Psoas muscle (tissue), 8 donors: ENCODE measurements at regions of chr7 and their contacts with region 1.

Region 1: GRCh38 chr7:39465055-39465929 is 100.9 kb upstream of the YAE1 start:
- DNase-seq: no peak
- ATAC-seq: peak in 3 of 4 donors; percentile 49 to 96 (median 89)
- H3K4me3 ChIP-seq: peak overlapping the region; percentile 35
- H3K27ac ChIP-seq: no peak overlapping the region
- H3K4me1 ChIP-seq: no peaks in the 10 kb centered on the region
- H3K27me3 ChIP-seq: peaks cover 0 to 3% (median 0%) of the 10 kb centered on the region in 3 donors
- CTCF ChIP-seq: peak; percentile 76

Region 2: GRCh38 chr7:38398725-38399321 is 1066.5 kb before region 1 on chr7:
- intact Hi-C with region 1: loop called in 1 of 2 experiments (anchors 5 kb)
- DNase-seq: peak; percentile 27 to 59
- ATAC-seq: peak in 1 of 4 donors; percentile 74
- H3K4me3 ChIP-seq: no peak overlapping the region
- H3K27ac ChIP-seq: no peak overlapping the region
- H3K4me1 ChIP-seq: no peaks in the 10 kb centered on the region
- H3K27me3 ChIP-seq: no peaks in the 10 kb centered on the region
- CTCF ChIP-seq: peak; percentile 83

Region 3: DNA sequence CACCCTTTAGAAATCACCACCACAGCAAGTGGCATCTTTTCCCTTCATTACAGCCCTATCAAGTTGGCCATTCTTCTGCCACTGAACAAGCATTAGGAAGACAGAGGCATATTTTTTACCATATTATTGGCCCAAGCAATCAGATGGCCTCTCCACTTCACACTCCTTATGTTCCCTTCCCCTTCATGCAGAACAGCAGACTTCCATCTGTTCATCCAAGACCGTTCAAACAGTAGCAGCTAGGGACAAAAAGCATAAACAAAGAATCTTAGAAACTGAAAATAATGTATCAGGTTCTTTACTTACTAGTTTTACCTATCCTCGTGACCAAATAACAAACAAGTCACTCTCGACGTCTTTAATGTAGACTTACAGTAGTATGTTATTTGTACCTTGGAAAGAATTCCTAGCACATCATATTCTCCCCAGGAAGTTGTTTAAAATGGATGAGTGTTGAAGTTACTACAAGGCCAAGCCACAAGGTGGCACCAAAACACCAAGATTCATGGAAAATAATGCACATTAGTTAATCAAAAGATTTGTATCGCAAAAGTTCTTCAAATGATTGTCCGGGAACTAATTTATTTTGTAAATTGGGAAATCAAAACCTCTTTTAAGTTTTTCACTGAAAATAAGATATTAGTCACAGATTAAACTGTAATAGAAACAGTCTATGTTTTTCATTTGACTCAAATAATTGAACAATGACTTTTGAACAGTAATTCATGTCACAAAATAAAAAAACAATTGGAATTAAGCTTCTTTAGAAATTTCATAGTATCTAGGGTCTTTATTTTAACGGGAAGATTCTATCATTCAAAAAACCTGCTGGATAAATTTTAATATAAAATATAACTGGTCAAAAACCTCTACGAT is 668.4 kb before region 1 on chr7:
- intact Hi-C with region 1: loop called in 1 of 2 experiments (anchors 5 kb)
- DNase-seq: peak in 1 of 2 donors; percentile 18
- ATAC-seq: peak in 1 of 4 donors; percentile 73
- H3K4me3 ChIP-seq: no peak overlapping the region
- H3K27ac ChIP-seq: no peak overlapping the region
- H3K4me1 ChIP-seq: no peaks in the 10 kb centered on the region
- H3K27me3 ChIP-seq: no peaks in the 10 kb centered on the region
- CTCF ChIP-seq: peak; percentile 82

Region 4: DNA sequence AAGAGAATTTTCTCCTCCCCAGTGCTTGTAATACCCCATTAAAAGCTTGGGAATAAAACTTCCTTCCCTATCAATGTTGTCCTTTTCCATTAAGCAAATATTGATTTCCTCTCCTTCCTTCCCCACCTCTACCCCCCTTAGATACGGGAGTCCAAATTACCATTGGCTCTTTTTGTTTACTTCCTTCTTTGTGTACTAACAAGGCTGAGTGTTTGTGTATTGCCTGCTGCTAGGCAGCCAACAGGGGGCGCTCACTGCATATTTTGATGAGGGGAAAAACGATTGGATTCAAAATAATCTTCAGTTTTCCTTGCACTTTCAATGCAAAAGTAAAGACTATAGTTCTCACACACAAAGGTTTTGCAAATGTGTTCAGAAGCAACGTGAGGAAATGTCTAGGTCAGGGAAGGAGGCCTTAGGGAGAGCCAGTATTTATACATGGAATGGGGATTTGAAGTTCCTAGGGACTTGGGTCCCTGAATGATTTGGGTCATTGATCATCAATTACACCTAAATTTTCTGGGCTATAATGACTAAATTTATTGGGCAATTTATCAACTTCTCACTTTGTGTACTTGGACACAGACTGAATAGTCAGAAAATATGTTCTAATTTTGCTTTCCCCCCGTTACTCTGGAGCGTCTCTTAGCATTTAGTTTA is 532.7 kb before region 1 on chr7:
- intact Hi-C with region 1: loop called (anchors 2 to 10 kb)
- DNase-seq: peak; percentile 40 to 68
- ATAC-seq: no peak
- H3K4me3 ChIP-seq: no peak overlapping the region
- H3K27ac ChIP-seq: no peak overlapping the region
- H3K4me1 ChIP-seq: no peaks in the 10 kb centered on the region
- H3K27me3 ChIP-seq: no peaks in the 10 kb centered on the region
- CTCF ChIP-seq: peak; percentile 58

Region 5: DNA sequence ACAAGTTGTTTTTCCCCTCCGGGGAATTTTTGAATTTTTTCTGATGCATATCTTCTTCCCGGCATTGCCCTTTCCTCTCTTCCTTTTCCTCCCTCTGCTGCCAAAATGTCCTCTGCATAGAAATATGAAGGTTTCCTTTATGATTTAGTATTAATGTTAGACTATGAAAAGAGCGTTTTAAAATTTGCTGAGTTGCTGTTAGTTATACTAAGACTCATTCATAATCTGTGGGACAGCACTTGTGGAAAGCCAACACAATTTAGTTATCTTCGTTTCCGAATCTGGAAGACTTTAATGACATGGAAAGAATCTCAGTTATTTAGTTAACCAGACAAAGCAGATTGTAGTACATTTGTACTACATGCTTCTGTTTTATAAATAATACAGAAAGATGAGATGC is 462.5 kb before region 1 on chr7:
- intact Hi-C with region 1: loop called in 1 of 2 experiments (anchors 5 kb)
- DNase-seq: no peak
- ATAC-seq: no peak
- H3K4me3 ChIP-seq: no peak overlapping the region
- H3K27ac ChIP-seq: no peak overlapping the region
- H3K4me1 ChIP-seq: no peaks in the 10 kb centered on the region
- H3K27me3 ChIP-seq: no peaks in the 10 kb centered on the region
- CTCF ChIP-seq: no peak